GM12878 (cell line): ENCODE measurements at regions of chr12 and their contacts with region 1.

Region 1: GRCh38 chr12:12736759-12737676 is 19.9 kb downstream of the CDKN1B start:
- DNase-seq: peak; percentile 45
- ATAC-seq: peak; percentile 95
- H3K4me3 ChIP-seq: peak overlapping the region; percentile 48; the same call in 1 of the 2 replicates
- H3K27ac ChIP-seq: peak overlapping the region; percentile 71
- H3K4me1 ChIP-seq: peaks cover 5% of the 10 kb centered on the region
- H3K27me3 ChIP-seq: no peaks in the 10 kb centered on the region
- CTCF ChIP-seq: peak; percentile 53 to 63 (median 58); a peak in 5 of 6 replicates
- EP300 ChIP-seq: 0 out of 4 replicates have a peak, but pooled peaks of 1 of the 2 experiments have one; percentile 8
- POLR2A ChIP-seq: peak; percentile 44; the same call in 1 of the 2 replicates
- RAD21 ChIP-seq: peak; percentile 62

Region 2: GRCh38 chr12:12365931-12366431 is 371.0 kb before region 1 on chr12:
- CTCF ChIA-PET with region 1: interaction called, 13 read pairs
- POLR2A ChIA-PET with region 1: interaction called, 5 read pairs
- RAD21 ChIA-PET with region 1: interaction called, 4 read pairs
- SMC1A ChIA-PET with region 1: interaction called, 3 read pairs
- in situ Hi-C with region 1: no loop called
- intact Hi-C with region 1: no loop called
- DNase-seq: no peak
- ATAC-seq: peak; percentile 66
- H3K4me3 ChIP-seq: no peak overlapping the region
- H3K27ac ChIP-seq: no peak overlapping the region
- H3K4me1 ChIP-seq: no peaks in the 10 kb centered on the region
- H3K27me3 ChIP-seq: no peaks in the 10 kb centered on the region
- CTCF ChIP-seq: no peak
- EP300 ChIP-seq: no peak
- POLR2A ChIP-seq: no peak
- RAD21 ChIP-seq: no peak

Region 3: DNA sequence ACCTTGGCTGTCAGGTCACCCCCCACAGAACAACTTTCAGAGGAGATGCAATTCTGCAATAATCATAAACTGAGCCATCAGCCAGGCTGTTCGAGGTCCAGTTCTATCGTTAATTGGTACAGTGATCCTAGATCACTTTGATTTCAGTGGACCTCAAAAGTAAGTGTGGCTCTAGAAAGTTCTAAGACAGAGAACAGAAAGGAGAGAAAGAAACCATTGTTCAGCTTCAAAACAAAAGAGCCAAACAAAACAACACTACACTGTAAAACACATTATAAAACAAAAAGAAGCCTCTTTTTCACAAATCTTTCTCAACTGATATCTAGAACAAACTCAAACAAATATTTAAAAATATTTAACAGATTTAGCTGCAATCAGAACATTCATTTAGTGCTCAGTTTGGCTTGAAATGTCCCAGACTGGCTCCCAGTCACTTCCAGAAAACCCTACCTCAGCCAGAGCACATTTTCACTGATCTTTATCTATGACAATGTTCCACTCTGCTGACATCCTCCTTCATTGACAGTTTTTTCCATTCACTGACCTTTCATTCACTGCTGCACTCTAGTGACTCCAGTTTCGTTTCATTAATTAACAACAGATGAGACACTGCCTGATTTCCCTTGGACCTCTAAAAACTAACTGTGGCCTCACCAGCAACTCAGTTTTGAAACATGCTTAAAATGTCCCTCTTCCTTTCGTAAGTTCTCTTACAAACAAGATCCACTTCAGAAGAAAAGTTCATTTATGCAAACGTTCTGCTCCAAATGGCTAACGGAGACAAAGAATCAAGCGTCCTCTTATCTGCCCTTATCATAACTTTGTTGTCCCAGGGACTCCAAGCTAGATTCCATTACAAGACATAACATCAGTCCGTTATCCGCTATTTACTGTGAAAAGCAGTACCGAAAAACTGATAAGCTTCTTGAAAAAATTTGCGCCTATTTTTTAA is 231.2 kb before region 1 on chr12:
- CTCF ChIA-PET with region 1: interaction called, 18 read pairs
- POLR2A ChIA-PET with region 1: no interaction called
- RAD21 ChIA-PET with region 1: interaction called, 14 read pairs
- SMC1A ChIA-PET with region 1: interaction called, 18 read pairs
- in situ Hi-C with region 1: no loop called
- intact Hi-C with region 1: no loop called
- DNase-seq: peak; percentile 94
- ATAC-seq: peak; percentile 87
- H3K4me3 ChIP-seq: peak overlapping the region; percentile 30
- H3K27ac ChIP-seq: peak overlapping the region; percentile 80
- H3K4me1 ChIP-seq: peaks cover 36% of the 10 kb centered on the region
- H3K27me3 ChIP-seq: no peaks in the 10 kb centered on the region
- CTCF ChIP-seq: no peak
- EP300 ChIP-seq: peak; percentile 92
- POLR2A ChIP-seq: no peak
- RAD21 ChIP-seq: peak; percentile 19; the same call in 1 of the 2 replicates

Region 4: GRCh38 chr12:12616512-12617310 is 120.3 kb before region 1 on chr12:
- CTCF ChIA-PET with region 1: interaction called, 22 read pairs
- POLR2A ChIA-PET with region 1: interaction called, 3 read pairs
- RAD21 ChIA-PET with region 1: interaction called, 18 read pairs
- SMC1A ChIA-PET with region 1: interaction called, 16 read pairs
- in situ Hi-C with region 1: no loop called
- intact Hi-C with region 1: no loop called
- DNase-seq: no peak
- ATAC-seq: no peak
- H3K4me3 ChIP-seq: no peak overlapping the region
- H3K27ac ChIP-seq: no peak overlapping the region
- H3K4me1 ChIP-seq: no peaks in the 10 kb centered on the region; the same call in 1 of the 2 replicates
- H3K27me3 ChIP-seq: no peaks in the 10 kb centered on the region
- CTCF ChIP-seq: no peak
- EP300 ChIP-seq: no peak
- POLR2A ChIP-seq: no peak
- RAD21 ChIP-seq: no peak

Region 5: GRCh38 chr12:12661086-12661485 is 75.9 kb before region 1 on chr12:
- CTCF ChIA-PET with region 1: interaction called, 39 read pairs
- POLR2A ChIA-PET with region 1: interaction called, 6 read pairs
- RAD21 ChIA-PET with region 1: interaction called, 17 read pairs
- SMC1A ChIA-PET with region 1: interaction called, 24 read pairs
- in situ Hi-C with region 1: no loop called
- intact Hi-C with region 1: no loop called
- DNase-seq: no peak
- ATAC-seq: no peak
- H3K4me3 ChIP-seq: no peak overlapping the region
- H3K27ac ChIP-seq: no peak overlapping the region
- H3K4me1 ChIP-seq: peaks cover 4% of the 10 kb centered on the region; the same call in 1 of the 2 replicates
- H3K27me3 ChIP-seq: no peaks in the 10 kb centered on the region
- CTCF ChIP-seq: no peak
- EP300 ChIP-seq: no peak
- POLR2A ChIP-seq: no peak
- RAD21 ChIP-seq: no peak

Region 6: GRCh38 chr12:12716793-12717585 is 20.0 kb before region 1 on chr12 and contains the start of gene CDKN1B:
- CTCF ChIA-PET with region 1: interaction called, 83 read pairs
- POLR2A ChIA-PET with region 1: interaction called, 40 read pairs
- RAD21 ChIA-PET with region 1: interaction called, 101 read pairs
- SMC1A ChIA-PET with region 1: interaction called, 94 read pairs
- in situ Hi-C with region 1: no loop called
- intact Hi-C with region 1: no loop called
- DNase-seq: peak; percentile 58
- ATAC-seq: peak; percentile 74
- H3K4me3 ChIP-seq: peak within 1 kb of the TSS; percentile 97
- H3K27ac ChIP-seq: peak within 1 kb of the TSS; percentile 97
- H3K4me1 ChIP-seq: peaks cover 20% of the 10 kb centered on the region
- H3K27me3 ChIP-seq: no peaks in the 10 kb centered on the region
- CTCF ChIP-seq: no peak
- EP300 ChIP-seq: no peak
- POLR2A ChIP-seq: peak; percentile 75
- RAD21 ChIP-seq: no peak
- polyA plus RNA-seq, gene CDKN1B: 4.2 to 8.0 TPM

Region 7: DNA sequence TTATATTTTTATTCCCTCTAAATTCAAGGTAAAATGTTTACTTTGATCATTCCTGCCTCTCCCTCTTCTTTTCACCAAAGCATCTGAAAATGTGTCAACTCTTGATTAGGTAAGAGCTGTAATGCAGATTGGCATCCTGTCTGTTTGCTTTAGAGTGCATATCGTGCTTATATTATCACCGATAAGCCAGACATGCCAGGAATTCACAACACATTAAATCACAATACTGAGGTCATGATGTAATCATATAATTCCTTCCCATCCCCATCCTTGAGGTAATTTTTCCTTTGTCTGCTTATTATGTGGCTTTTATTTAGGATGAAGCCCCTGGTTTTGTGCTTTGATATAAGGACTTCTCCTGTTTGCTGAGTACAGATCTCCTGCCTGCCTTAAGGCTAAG is 86.3 kb after region 1 on chr12:
- CTCF ChIA-PET with region 1: no interaction called
- POLR2A ChIA-PET with region 1: no interaction called
- RAD21 ChIA-PET with region 1: no interaction called
- SMC1A ChIA-PET with region 1: no interaction called
- in situ Hi-C with region 1: no loop called
- intact Hi-C with region 1: no loop called
- DNase-seq: no peak
- ATAC-seq: no peak
- H3K4me3 ChIP-seq: no peak overlapping the region
- H3K27ac ChIP-seq: no peak overlapping the region
- H3K4me1 ChIP-seq: peaks cover 12% of the 10 kb centered on the region
- H3K27me3 ChIP-seq: no peaks in the 10 kb centered on the region
- CTCF ChIP-seq: no peak
- EP300 ChIP-seq: no peak
- POLR2A ChIP-seq: no peak
- RAD21 ChIP-seq: no peak

Region 8: GRCh38 chr12:13023811-13024530 is 287.0 kb after region 1 on chr12:
- CTCF ChIA-PET with region 1: no interaction called
- POLR2A ChIA-PET with region 1: no interaction called
- RAD21 ChIA-PET with region 1: no interaction called
- SMC1A ChIA-PET with region 1: no interaction called
- in situ Hi-C with region 1: no loop called
- intact Hi-C with region 1: no loop called
- DNase-seq: no peak
- ATAC-seq: no peak
- H3K4me3 ChIP-seq: no peak overlapping the region
- H3K27ac ChIP-seq: no peak overlapping the region
- H3K4me1 ChIP-seq: no peaks in the 10 kb centered on the region
- H3K27me3 ChIP-seq: peaks cover 2 to 3% of the 10 kb centered on the region in 2 experiments; a peak in 2 of 4 replicates
- CTCF ChIP-seq: peak in 1 of 3 experiments; percentile 18; a peak in 1 of 6 replicates
- EP300 ChIP-seq: no peak
- POLR2A ChIP-seq: no peak
- RAD21 ChIP-seq: peak; percentile 26; the same call in 1 of the 2 replicates